ENCODE measurements at regions of chr17 and their contacts with region 1.

Region 1: GRCh38 chr17:2172077-2172851 is 117.4 kb downstream of the HIC1 start:
- DNase-seq: no peak
- H3K4me3 ChIP-seq: no peak overlapping the region
- H3K27ac ChIP-seq: no peak overlapping the region
- H3K4me1 ChIP-seq: peaks cover 0 to 4% (median 0%) of the 10 kb centered on the region in 4 experiments; a peak in 2 of 7 replicates
- H3K27me3 ChIP-seq: no peaks in the 10 kb centered on the region
- CTCF ChIP-seq: no peak
- EP300 ChIP-seq: no peak
- POLR2A ChIP-seq: no peak
- RAD21 ChIP-seq: no peak

Region 2: GRCh38 chr17:2070241-2071023 is 101.8 kb before region 1 on chr17:
- CTCF ChIA-PET with region 1: interaction called, 12 read pairs
- POLR2A ChIA-PET with region 1: no interaction called
- DNase-seq: no peak
- H3K4me3 ChIP-seq: no peak overlapping the region
- H3K27ac ChIP-seq: no peak overlapping the region
- H3K4me1 ChIP-seq: peaks cover under 1 to 14% (median 5%) of the 10 kb centered on the region in 4 experiments; a peak in 6 of 7 replicates
- H3K27me3 ChIP-seq: no peaks in the 10 kb centered on the region
- CTCF ChIP-seq: peak; percentile 26 to 53 (median 44)
- EP300 ChIP-seq: no peak
- POLR2A ChIP-seq: no peak
- RAD21 ChIP-seq: peak; percentile 17 to 42; a peak in 2 of 4 replicates

Region 3: DNA sequence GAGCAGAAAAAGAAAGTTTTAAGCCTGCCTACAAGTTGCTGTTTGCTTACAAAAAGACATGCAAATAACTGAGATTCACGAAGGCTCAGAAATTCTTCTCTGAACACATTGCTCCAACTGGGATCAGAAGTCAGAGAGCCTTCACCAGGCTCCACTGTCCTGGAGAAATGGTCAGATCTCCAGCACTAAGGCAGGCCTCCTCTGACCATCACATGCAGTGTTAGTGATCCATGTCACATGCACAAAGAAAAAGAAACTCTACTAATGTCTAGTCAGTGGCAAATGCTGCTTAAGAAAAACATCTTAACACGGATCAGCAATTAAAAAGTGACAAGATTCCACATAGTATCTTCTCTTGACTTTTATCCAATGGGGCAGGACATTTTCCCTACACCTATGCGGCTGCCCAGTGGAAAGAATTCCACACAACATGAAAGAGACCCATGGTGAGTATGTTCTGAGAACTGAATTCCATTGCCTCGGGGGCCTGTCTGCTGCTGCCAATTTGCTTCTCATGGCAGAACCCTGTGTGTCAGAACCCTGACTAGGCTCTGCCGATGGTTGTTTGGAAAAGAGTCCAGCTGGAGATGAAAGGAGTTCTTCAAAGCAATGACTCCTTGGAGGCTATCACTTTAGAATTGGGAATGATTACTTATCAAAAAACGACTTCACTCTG is 20.8 kb before region 1 on chr17:
- CTCF ChIA-PET with region 1: interaction called, 10 read pairs
- POLR2A ChIA-PET with region 1: no interaction called
- DNase-seq: no peak
- H3K4me3 ChIP-seq: no peak overlapping the region
- H3K27ac ChIP-seq: no peak overlapping the region
- H3K4me1 ChIP-seq: no peaks in the 10 kb centered on the region
- H3K27me3 ChIP-seq: no peaks in the 10 kb centered on the region
- CTCF ChIP-seq: no peak
- EP300 ChIP-seq: no peak
- POLR2A ChIP-seq: no peak
- RAD21 ChIP-seq: no peak

Region 4: GRCh38 chr17:2369551-2370210 is 197.4 kb after region 1 on chr17:
- CTCF ChIA-PET with region 1: no interaction called
- POLR2A ChIA-PET with region 1: no interaction called
- DNase-seq: peak in 1 of 2 experiments; percentile 77
- H3K4me3 ChIP-seq: no peak overlapping the region
- H3K27ac ChIP-seq: no peak overlapping the region
- H3K4me1 ChIP-seq: peaks cover 0 to 12% (median 5%) of the 10 kb centered on the region in 4 experiments; a peak in 3 of 7 replicates
- H3K27me3 ChIP-seq: no peaks in the 10 kb centered on the region
- CTCF ChIP-seq: peak; percentile 45 to 54 (median 48)
- EP300 ChIP-seq: no peak
- POLR2A ChIP-seq: no peak
- RAD21 ChIP-seq: peak; percentile 53 to 64

Measured in H1 (cell line).